ENCODE measurements at regions of chr21 and their contacts with region 1.

Region 1: DNA sequence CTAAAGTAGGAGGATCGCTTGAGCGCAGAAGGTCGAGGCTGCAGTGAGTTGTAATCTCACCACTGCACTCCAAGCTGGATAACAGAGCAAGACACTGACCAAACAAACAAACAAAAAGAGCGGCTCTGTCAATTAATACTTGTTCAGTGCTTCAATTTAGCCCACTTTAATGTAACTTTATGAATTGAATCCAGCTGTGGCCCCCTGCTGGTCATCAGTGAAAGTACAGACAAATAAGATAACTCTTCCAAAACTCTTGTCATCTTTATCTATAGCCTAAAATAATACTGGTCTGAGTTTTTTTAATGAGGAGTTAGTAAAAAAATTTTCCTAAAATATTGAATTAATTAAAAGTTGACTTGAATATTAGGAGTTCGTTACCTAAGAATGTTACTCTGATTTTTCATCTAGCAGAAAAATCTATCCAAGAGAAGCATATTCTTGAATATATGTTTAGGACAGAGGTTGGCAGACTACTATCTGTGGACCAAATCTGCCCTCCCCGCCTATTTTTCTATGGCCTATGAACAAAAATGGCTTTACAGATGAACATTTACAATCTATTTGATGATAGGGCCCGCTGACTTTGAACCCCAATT is 26.1 kb downstream of the ATP5PF start:
- DNase-seq: no peak
- H3K4me3 ChIP-seq: no peak overlapping the region
- H3K27ac ChIP-seq: no peak overlapping the region
- H3K4me1 ChIP-seq: no peaks in the 10 kb centered on the region
- H3K27me3 ChIP-seq: no peaks in the 10 kb centered on the region
- CTCF ChIP-seq: peak; percentile 56 to 87 (median 72)
- POLR2A ChIP-seq: no peak

Region 2: GRCh38 chr21:25607151-25608043 is 101.2 kb before region 1 on chr21 and contains the start of gene MRPL39:
- intact Hi-C with region 1: loop called (anchors 5 kb)
- DNase-seq: peak; percentile 53
- H3K4me3 ChIP-seq: peak within 1 kb of the TSS; percentile 81 to 97 (median 90)
- H3K27ac ChIP-seq: peak within 1 kb of the TSS; percentile 85 to 92 (median 92)
- H3K4me1 ChIP-seq: peaks cover 12 to 42% (median 18%) of the 10 kb centered on the region in 3 donors
- H3K27me3 ChIP-seq: no peaks in the 10 kb centered on the region
- CTCF ChIP-seq: peak; percentile 24 to 63 (median 42)
- POLR2A ChIP-seq: peak in 1 of 4 donors; percentile 6
- total RNA-seq, gene MRPL39: 12.5 to 30.5 (median 28.1) TPM

Measured in esophagus squamous epithelium (tissue), 5 donors.